Aorta (tissue), 5 donors: ENCODE measurements at regions of chr3 and their contacts with region 1.

Region 1: DNA sequence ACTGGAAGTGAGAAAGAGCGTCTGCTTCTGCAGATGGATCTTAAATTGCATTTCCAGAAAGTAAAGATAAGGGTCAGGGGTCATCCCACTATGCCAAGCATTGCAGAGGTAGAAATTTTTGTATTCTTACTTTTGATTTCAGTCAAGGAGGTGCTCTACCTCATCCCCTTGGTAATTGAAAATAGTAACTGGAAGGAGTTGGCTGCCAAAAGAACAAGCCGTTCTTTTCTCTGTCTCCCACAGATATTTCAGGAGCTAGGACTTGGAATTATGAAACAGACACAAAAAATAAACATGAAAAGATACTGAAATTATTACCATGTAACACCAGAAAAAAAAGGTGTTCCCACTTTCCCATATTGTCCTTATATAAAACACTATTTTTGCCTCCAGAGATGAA is 309.9 kb upstream of the UMPS start:
- DNase-seq: no peak
- ATAC-seq: no peak
- H3K4me3 ChIP-seq: no peak overlapping the region
- H3K27ac ChIP-seq: peak overlapping the region in 1 of 2 donors; percentile 84
- H3K4me1 ChIP-seq: peaks cover 0 to 2% of the 10 kb centered on the region in 2 donors
- H3K27me3 ChIP-seq: no peaks in the 10 kb centered on the region

Region 2: GRCh38 chr3:124363476-124363875 is 56.9 kb before region 1 on chr3:
- intact Hi-C with region 1: no loop called
- DNase-seq: no peak
- ATAC-seq: no peak
- H3K4me3 ChIP-seq: no peak overlapping the region
- H3K27ac ChIP-seq: peak overlapping the region in 1 of 2 donors; percentile 12
- H3K4me1 ChIP-seq: peaks cover 4% of the 10 kb centered on the region in 2 donors
- H3K27me3 ChIP-seq: no peaks in the 10 kb centered on the region

Region 3: GRCh38 chr3:124456506-124456905 is 36.1 kb after region 1 on chr3:
- intact Hi-C with region 1: loop called in 1 of 2 experiments (anchors 5 kb)
- DNase-seq: no peak
- ATAC-seq: no peak
- H3K4me3 ChIP-seq: no peak overlapping the region
- H3K27ac ChIP-seq: no peak overlapping the region
- H3K4me1 ChIP-seq: no peaks in the 10 kb centered on the region
- H3K27me3 ChIP-seq: no peaks in the 10 kb centered on the region